PC-9 (cell line): ENCODE measurements at regions of chr12 and their contacts with region 1.

Region 1: DNA sequence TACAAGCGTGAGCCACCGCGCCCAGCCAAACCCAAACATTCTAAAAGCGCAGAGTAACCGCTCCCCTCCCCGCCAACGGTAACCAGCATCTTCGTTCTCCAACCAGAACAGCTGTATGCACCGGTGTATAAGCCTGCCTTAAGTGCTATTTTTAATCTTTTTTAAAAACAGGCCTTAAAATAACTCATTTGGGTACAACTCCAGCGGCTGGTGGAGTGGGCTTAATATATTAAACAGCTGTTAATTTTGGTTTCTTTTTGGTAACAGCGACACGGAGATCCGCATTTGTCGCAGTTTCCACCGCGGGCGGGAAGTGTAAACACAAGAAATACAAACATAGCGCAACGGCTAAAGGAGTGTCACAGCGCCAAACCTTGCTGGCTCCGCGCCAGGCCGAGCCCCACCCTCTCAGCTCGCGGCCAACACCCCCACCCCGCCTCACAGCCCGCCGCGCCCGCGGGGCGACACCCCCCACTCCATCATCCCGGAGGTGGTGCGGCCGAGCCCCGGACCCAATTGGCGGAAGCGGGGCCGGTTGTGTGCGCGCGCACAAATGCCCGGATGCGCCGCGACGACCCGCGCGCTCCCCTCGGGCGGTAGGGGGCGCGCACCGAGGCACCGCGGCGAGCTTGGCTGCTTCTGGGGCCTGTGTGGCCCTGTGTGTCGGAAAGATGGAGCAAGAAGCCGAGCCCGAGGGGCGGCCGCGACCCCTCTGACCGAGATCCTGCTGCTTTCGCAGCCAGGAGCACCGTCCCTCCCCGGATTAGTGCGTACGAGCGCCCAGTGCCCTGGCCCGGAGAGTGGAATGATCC is at the start of gene MDM2:
- DNase-seq: peak; percentile 76 to 97
- H3K4me3 ChIP-seq: peak within 1 kb of the TSS; percentile 84
- H3K27ac ChIP-seq: peak within 1 kb of the TSS; percentile 92
- H3K4me1 ChIP-seq: peaks cover 20% of the 10 kb centered on the region
- H3K27me3 ChIP-seq: no peaks in the 10 kb centered on the region
- CTCF ChIP-seq: peak; percentile 72
- total RNA-seq, gene MDM2: 74.3 and 95.2 TPM in 2 replicates

Region 2: DNA sequence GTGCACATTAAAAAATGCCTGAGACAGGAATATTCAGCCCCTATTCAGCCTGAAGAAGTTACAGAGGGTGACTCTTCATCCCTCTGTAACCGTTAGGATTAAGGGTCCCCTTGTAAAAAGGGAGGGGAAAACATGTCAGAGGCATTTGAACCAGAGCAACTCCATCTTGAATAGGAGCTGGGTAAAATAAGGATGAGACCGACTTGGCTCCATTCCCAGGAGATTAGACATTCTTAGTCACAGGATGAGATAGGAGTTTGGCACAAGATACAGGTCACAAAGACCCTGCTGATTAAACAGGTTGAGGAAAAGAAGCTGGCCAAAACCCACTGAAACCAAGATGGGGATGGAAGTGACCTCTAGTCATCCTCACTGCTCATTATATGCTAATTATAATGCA is 455.7 kb before region 1 on chr12:
- CTCF ChIA-PET with region 1: no interaction called
- POLR2A ChIA-PET with region 1: no interaction called
- intact Hi-C with region 1: no loop called
- DNase-seq: no peak
- H3K4me3 ChIP-seq: no peak overlapping the region
- H3K27ac ChIP-seq: no peak overlapping the region
- H3K4me1 ChIP-seq: no peaks in the 10 kb centered on the region
- H3K27me3 ChIP-seq: no peaks in the 10 kb centered on the region
- CTCF ChIP-seq: no peak

Region 3: DNA sequence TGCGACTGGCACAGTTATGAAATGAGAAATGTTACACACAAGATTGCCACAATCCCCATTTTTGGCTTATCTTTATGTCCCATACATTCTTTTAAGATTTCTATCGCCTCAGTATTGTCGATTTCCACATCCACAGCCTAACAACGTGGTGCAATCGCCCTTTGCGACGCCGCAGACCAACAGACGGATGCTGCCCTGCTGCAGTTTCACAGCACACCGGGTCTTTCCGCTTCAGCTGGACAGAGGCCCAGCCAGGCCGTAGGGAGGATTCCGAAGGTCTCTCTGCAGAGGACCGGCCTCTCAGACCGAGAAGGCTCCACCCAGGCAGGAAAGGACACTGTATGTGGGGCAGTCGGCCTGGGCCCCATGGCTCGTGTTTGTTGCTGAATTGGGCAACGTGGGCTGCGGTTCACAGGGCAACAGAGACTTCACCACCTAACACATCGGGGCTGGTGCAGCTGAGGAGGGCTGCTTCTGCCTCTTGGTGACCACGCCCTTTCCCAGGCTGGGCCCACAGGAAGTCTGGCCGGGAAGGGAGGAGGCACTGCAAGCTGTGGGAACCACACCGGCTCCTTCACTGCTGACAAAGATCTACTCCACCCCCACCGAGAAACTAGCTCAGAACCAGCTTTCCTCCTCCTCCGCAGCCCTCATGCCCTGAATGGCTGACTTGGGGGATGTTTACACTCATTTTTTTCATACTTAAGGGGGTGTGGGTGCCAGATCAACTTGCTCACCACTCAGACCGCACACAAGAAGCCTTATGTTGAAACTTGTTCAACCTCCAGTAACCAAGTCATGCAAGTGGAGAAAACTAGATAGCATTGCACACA is 442.7 kb before region 1 on chr12:
- CTCF ChIA-PET with region 1: no interaction called
- POLR2A ChIA-PET with region 1: no interaction called
- intact Hi-C with region 1: loop called (anchors 10 kb)
- DNase-seq: peak; percentile 93 to 95
- H3K4me3 ChIP-seq: peak overlapping the region; percentile 55
- H3K27ac ChIP-seq: peak overlapping the region; percentile 87
- H3K4me1 ChIP-seq: peaks cover 19% of the 10 kb centered on the region
- H3K27me3 ChIP-seq: no peaks in the 10 kb centered on the region
- CTCF ChIP-seq: no peak

Region 4: GRCh38 chr12:68387338-68387737 is 420.4 kb before region 1 on chr12:
- CTCF ChIA-PET with region 1: no interaction called
- POLR2A ChIA-PET with region 1: no interaction called
- intact Hi-C with region 1: no loop called
- DNase-seq: no peak
- H3K4me3 ChIP-seq: no peak overlapping the region
- H3K27ac ChIP-seq: no peak overlapping the region
- H3K4me1 ChIP-seq: 0 out of 2 replicates have a peak, but pooled peaks cover 6% of the 10 kb centered on the region
- H3K27me3 ChIP-seq: 0 out of 2 replicates have a peak, but pooled peaks cover 4% of the 10 kb centered on the region
- CTCF ChIP-seq: no peak

Region 5: GRCh38 chr12:68745904-68746571 is 61.7 kb before region 1 on chr12 and contains the start of gene SLC35E3:
- CTCF ChIA-PET with region 1: no interaction called
- POLR2A ChIA-PET with region 1: interaction called, 3 read pairs
- intact Hi-C with region 1: loop called (anchors 1 kb)
- DNase-seq: peak; percentile 80 to 90
- H3K4me3 ChIP-seq: peak within 1 kb of the TSS; percentile 77
- H3K27ac ChIP-seq: peak within 1 kb of the TSS; percentile 23; the same call in 1 of the 2 replicates
- H3K4me1 ChIP-seq: peaks cover 17% of the 10 kb centered on the region
- H3K27me3 ChIP-seq: no peaks in the 10 kb centered on the region
- CTCF ChIP-seq: no peak
- total RNA-seq, gene SLC35E3: 8.9 and 10.7 TPM in 2 replicates

Region 6: DNA sequence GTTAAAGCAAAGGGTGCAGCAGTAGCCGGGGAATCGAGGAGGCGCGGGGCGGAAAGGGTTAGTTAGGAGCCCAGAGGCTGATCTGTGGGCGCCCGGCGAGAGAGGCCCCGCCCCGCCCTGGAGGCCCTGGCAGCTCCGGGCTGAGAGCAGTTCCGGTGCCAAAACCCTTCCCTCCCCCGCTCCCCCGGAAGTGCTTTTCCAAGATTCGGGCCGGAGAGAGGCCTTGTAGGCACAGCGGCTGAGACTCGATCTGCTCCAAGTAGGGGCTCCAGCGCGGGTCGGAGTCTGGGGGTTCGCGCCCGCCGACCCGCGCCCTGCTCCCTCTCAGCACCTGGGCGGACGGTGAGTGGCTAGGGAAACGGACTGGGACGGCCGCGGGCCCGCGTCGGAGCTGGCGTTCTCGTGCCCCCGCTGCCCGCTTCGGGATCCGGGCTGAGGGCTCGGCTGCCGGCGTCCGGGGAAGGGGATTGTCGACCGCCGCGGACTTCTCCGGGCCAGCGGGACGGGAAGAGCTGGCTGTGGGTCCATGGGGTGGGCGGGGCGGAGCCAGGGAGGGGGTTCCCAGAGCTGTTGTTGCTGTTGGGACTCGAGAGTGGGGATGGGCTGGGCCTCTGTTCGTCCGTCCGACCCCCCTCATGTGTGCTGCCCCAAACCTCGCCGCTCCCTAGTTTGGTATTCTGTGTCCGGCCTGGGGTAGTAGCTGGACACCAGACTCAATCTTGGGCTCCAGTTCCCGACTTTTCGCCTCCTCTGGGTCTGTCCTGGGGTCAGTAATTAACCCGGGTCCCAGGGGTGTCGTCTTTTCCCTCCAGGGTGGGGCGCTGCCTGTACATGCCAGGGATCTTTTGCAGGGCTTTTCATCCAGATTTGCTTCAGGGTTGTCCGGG is 662.6 kb after region 1 on chr12 and contains the start of gene FRS2:
- CTCF ChIA-PET with region 1: no interaction called
- POLR2A ChIA-PET with region 1: no interaction called
- intact Hi-C with region 1: no loop called
- DNase-seq: peak; percentile 81 to 86
- H3K4me3 ChIP-seq: peak within 1 kb of the TSS; percentile 72
- H3K27ac ChIP-seq: peak within 1 kb of the TSS; percentile 54
- H3K4me1 ChIP-seq: peaks cover 26% of the 10 kb centered on the region
- H3K27me3 ChIP-seq: no peaks in the 10 kb centered on the region
- CTCF ChIP-seq: peak; percentile 47; the same call in 1 of the 2 replicates
- total RNA-seq, gene FRS2: 15.6 and 23.3 TPM in 2 replicates